Natural killer cell (primary cell): ENCODE measurements at regions of chr15 and their contacts with region 1.

Region 1: GRCh38 chr15:32994810-32995424 is 199.6 kb downstream of the FMN1 start:
- DNase-seq: no peak
- ATAC-seq: no peak
- H3K4me3 ChIP-seq: no peak overlapping the region
- H3K4me3 Mint-ChIP-seq: no peak overlapping the region
- H3K27ac ChIP-seq: no peak overlapping the region
- H3K27ac Mint-ChIP-seq: no peak overlapping the region
- H3K4me1 ChIP-seq: no peaks in the 10 kb centered on the region
- H3K4me1 Mint-ChIP-seq: no peaks in the 10 kb centered on the region
- H3K27me3 ChIP-seq: no peaks in the 10 kb centered on the region
- H3K27me3 Mint-ChIP-seq: peaks cover 0 to 9% of the 10 kb centered on the region in 2 donors
- CTCF ChIP-seq: peak; percentile 12

Region 2: GRCh38 chr15:32669896-32670619 is 324.9 kb before region 1 on chr15:
- intact Hi-C with region 1: loop called (anchors 5 kb)
- DNase-seq: no peak
- ATAC-seq: no peak
- H3K4me3 ChIP-seq: no peak overlapping the region
- H3K4me3 Mint-ChIP-seq: no peak overlapping the region
- H3K27ac ChIP-seq: no peak overlapping the region
- H3K27ac Mint-ChIP-seq: no peak overlapping the region
- H3K4me1 ChIP-seq: no peaks in the 10 kb centered on the region
- H3K4me1 Mint-ChIP-seq: no peaks in the 10 kb centered on the region
- H3K27me3 ChIP-seq: no peaks in the 10 kb centered on the region
- H3K27me3 Mint-ChIP-seq: no peaks in the 10 kb centered on the region
- CTCF ChIP-seq: no peak